GM10248 (cell line): ENCODE measurements at regions of chr17 and their contacts with region 1.

Region 1: GRCh38 chr17:48441231-48441711 is 11.3 kb upstream of the SKAP1 start:
- DNase-seq: peak; percentile 71
- CTCF ChIP-seq: no peak

Region 2: GRCh38 chr17:48429638-48430586 is 11.4 kb before region 1 on chr17 and contains the start of gene SKAP1:
- CTCF ChIA-PET with region 1: interaction called, 17 read pairs
- POLR2A ChIA-PET with region 1: no interaction called
- DNase-seq: peak; percentile 78
- CTCF ChIP-seq: no peak

Region 3: DNA sequence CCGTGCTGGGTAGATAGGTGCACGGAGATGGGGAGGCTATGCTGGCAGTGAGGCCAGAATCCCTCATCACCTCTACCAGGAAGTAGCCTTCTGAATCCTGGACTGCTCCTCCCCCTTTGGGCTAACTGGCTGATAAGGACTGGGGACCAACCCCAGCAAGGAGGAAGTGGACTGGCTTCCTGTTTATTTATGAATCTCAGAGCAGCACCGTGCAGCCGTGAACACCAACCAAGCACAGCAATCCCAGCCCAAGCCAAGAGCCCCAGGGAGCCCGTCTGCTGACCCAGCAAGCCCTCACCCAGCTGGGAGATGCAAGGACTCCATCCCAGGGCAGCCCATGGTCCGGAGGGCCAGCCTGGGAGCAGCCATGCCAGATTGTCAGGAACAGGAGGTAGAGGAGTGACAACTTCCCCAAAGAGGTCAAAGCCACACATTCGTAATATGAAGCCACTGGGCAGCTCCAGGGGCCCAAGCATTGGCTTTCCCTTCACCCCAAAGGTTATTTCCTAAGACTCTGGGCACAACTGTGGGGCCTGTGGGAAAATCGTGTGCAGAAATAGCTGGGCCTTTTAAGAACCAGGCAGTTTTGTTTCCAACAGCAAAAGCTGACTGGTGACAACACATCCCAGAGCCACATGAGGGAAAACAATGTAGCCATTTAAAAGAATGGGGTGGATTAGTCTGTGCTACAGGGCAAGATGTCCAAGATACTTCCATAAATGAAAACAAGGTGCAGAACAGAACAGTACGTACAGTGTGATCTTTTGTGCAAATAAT is 949.5 kb after region 1 on chr17:
- CTCF ChIA-PET with region 1: no interaction called
- POLR2A ChIA-PET with region 1: no interaction called
- DNase-seq: peak; percentile 60
- CTCF ChIP-seq: no peak